MCF 10A (cell line): ENCODE measurements at regions of chr2 and their contacts with region 1.

Region 1: GRCh38 chr2:264660-265468 is at the start of gene ACP1:
- DNase-seq: peak; percentile 95
- H3K4me3 Mint-ChIP-seq: peak within 1 kb of the TSS; percentile 94
- H3K27ac Mint-ChIP-seq: peak within 1 kb of the TSS; percentile 87
- H3K4me1 Mint-ChIP-seq: peaks cover 28% of the 10 kb centered on the region
- H3K27me3 Mint-ChIP-seq: no peaks in the 10 kb centered on the region
- CTCF ChIP-seq: no peak
- total RNA-seq, gene ACP1: 132 and 135 TPM in 2 replicates

Region 2: GRCh38 chr2:223971-224760 is 40.7 kb before region 1 on chr2:
- CTCF ChIA-PET with region 1: no interaction called
- POLR2A ChIA-PET with region 1: no interaction called
- intact Hi-C with region 1: no loop called
- DNase-seq: no peak
- H3K4me3 Mint-ChIP-seq: no peak overlapping the region
- H3K27ac Mint-ChIP-seq: no peak overlapping the region
- H3K4me1 Mint-ChIP-seq: no peaks in the 10 kb centered on the region
- H3K27me3 Mint-ChIP-seq: no peaks in the 10 kb centered on the region
- CTCF ChIP-seq: no peak

Region 3: DNA sequence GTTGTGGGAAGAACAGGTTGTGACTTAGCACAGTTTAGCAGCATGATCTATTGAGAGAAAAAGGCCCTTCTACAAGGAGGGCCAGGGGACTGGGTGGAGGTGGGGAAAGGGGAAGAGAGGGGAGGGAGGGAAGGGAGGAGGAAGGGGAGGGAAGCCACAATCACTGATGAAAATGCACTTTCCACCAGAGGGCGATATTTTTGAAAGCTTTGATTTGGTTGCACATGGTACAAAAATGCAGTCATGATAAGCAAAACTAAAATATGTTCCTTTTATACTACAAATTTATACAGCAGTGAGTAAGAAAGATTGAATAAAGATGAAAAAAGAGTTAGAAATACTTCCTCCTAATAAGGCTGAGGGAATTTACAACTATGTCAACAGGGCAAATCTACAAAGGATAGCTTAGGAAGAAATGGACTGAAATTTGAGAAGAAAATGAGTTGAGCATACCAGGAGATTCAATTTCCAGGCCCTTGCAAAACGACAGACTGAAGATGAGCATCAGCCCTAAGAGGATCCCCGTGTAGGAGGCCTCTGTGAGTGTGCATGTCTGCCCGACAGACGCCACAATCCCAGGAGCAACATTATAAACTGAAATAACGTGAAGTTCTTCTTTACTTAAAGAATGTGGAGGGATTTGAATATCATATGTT is 18.2 kb before region 1 on chr2:
- CTCF ChIA-PET with region 1: interaction called, 12 read pairs
- POLR2A ChIA-PET with region 1: interaction called, 7 read pairs
- intact Hi-C with region 1: no loop called
- DNase-seq: peak; percentile 70
- H3K4me3 Mint-ChIP-seq: no peak overlapping the region
- H3K27ac Mint-ChIP-seq: no peak overlapping the region
- H3K4me1 Mint-ChIP-seq: peaks cover 8% of the 10 kb centered on the region
- H3K27me3 Mint-ChIP-seq: no peaks in the 10 kb centered on the region
- CTCF ChIP-seq: peak; percentile 51

Region 4: DNA sequence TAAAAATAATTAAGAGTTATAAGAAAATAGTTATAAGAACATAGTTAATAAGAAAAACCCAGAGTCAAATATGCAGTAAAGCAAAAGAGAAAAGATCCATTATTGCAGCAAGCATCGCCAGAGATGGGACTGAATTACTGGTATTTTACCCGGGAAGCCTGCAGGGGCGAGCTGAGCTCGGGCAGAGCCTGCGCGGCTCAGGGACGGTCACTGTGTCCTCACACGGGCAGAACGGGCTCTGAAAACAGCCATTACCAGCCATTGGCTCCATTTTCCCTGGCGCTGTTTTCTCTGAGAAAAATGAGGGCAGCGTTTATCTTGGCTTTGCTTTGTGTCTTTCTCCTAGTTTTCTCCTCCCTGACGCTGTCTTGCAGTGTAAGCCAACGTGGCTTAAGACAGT is 118.3 kb after region 1 on chr2:
- CTCF ChIA-PET with region 1: no interaction called
- POLR2A ChIA-PET with region 1: no interaction called
- intact Hi-C with region 1: loop called (anchors 10 kb)
- DNase-seq: no peak
- H3K4me3 Mint-ChIP-seq: no peak overlapping the region
- H3K27ac Mint-ChIP-seq: no peak overlapping the region
- H3K4me1 Mint-ChIP-seq: peaks cover 8% of the 10 kb centered on the region
- H3K27me3 Mint-ChIP-seq: no peaks in the 10 kb centered on the region
- CTCF ChIP-seq: no peak